Endothelial cell of umbilical vein (primary cell): ENCODE measurements at regions of chr17 and their contacts with region 1.

Region 1: GRCh38 chr17:57662644-57663308 is 82.3 kb downstream of the CCDC182 start:
- DNase-seq: peak; percentile 98
- H3K4me3 ChIP-seq: peak overlapping the region in 2 of 3 experiments; percentile 5 to 32
- H3K27ac ChIP-seq: peak overlapping the region; percentile 87
- H3K4me1 ChIP-seq: peaks cover 13% of the 10 kb centered on the region
- H3K27me3 ChIP-seq: no peaks in the 10 kb centered on the region
- CTCF ChIP-seq: no peak
- POLR2A ChIP-seq: no peak

Region 2: GRCh38 chr17:57552114-57552624 is 110.6 kb before region 1 on chr17:
- CTCF ChIA-PET with region 1: no interaction called
- POLR2A ChIA-PET with region 1: no interaction called
- dilution Hi-C with region 1: no loop called
- intact Hi-C with region 1: no loop called
- DNase-seq: no peak
- H3K4me3 ChIP-seq: no peak overlapping the region
- H3K27ac ChIP-seq: no peak overlapping the region
- H3K4me1 ChIP-seq: peaks cover 3% of the 10 kb centered on the region
- H3K27me3 ChIP-seq: no peaks in the 10 kb centered on the region
- CTCF ChIP-seq: peak; percentile 24 to 54
- POLR2A ChIP-seq: no peak

Region 3: GRCh38 chr17:57597531-57598453 is 65.0 kb before region 1 on chr17:
- CTCF ChIA-PET with region 1: interaction called, 4 read pairs
- POLR2A ChIA-PET with region 1: no interaction called
- dilution Hi-C with region 1: no loop called
- intact Hi-C with region 1: loop called (anchors 2 kb)
- DNase-seq: peak; percentile 67
- H3K4me3 ChIP-seq: no peak overlapping the region
- H3K27ac ChIP-seq: no peak overlapping the region
- H3K4me1 ChIP-seq: no peaks in the 10 kb centered on the region
- H3K27me3 ChIP-seq: peaks cover 7 to 9% of the 10 kb centered on the region in 2 experiments
- CTCF ChIP-seq: peak; percentile 78 to 79
- POLR2A ChIP-seq: no peak